RWPE1 (cell line): ENCODE measurements at regions of chr1 and their contacts with region 1.

Region 1: GRCh38 chr1:221188458-221188857 is 309.2 kb downstream of the HLX start:
- DNase-seq: no peak
- H3K27ac ChIP-seq: no peak overlapping the region
- CTCF ChIP-seq: no peak

Region 2: GRCh38 chr1:221203224-221204054 is 15.0 kb after region 1 on chr1:
- CTCF ChIA-PET with region 1: interaction called, 11 read pairs
- POLR2A ChIA-PET with region 1: no interaction called
- DNase-seq: peak; percentile 50
- H3K27ac ChIP-seq: no peak overlapping the region
- CTCF ChIP-seq: peak; percentile 70